ENCODE measurements at regions of chr3 and their contacts with region 1.

Region 1: DNA sequence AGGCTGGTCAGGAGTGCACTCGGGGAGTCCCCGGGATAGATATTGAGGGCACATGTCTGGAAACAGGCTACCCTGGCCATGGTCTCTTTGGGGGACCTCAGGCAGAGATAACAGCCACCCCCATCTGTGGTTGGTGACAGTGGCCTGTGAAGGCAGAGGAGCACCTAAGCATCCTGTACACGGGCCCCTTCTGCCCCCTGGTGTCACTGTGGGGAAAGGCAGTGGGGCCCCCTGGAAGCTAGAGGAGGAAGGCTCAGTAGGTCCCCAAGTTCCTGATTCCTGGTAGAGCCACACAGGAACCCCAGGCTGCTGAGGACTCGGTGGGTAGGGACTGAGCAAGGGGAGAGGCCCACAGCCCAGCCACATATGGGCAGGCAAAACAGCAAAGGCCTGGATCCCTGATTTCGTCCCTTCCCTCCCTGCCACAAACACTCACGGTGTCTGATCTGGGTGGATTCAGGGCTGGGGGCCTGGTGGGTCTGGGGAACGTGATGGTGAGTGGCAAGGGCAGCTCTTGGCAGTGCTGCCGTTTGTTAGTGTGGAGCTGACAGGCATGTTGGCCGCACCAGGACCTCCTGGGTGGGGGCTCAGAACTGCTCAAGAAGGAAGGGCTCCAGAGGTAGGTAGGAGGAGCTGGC is 14.1 kb upstream of the CXCR6 start:
- DNase-seq: peak; percentile 55 to 64 (median 56)
- H3K4me3 ChIP-seq: no peak overlapping the region
- H3K4me3 Mint-ChIP-seq: no peak overlapping the region
- H3K27ac ChIP-seq: no peak overlapping the region
- H3K27ac Mint-ChIP-seq: peak overlapping the region in 3 of 7 donors; percentile 22 to 68 (median 53)
- H3K4me1 ChIP-seq: no peaks in the 10 kb centered on the region
- H3K4me1 Mint-ChIP-seq: peaks cover 5 to 23% (median 9%) of the 10 kb centered on the region in 4 donors
- H3K27me3 ChIP-seq: no peaks in the 10 kb centered on the region
- H3K27me3 Mint-ChIP-seq: no peaks in the 10 kb centered on the region

Region 2: GRCh38 chr3:45507820-45508317 is 421.3 kb before region 1 on chr3:
- CTCF ChIA-PET with region 1: interaction called, 4 read pairs
- POLR2A ChIA-PET with region 1: no interaction called
- intact Hi-C with region 1: loop called (anchors 5 kb)
- DNase-seq: no peak
- H3K4me3 ChIP-seq: no peak overlapping the region
- H3K4me3 Mint-ChIP-seq: no peak overlapping the region
- H3K27ac ChIP-seq: no peak overlapping the region
- H3K27ac Mint-ChIP-seq: no peak overlapping the region
- H3K4me1 ChIP-seq: peaks cover 10% of the 10 kb centered on the region
- H3K4me1 Mint-ChIP-seq: peaks cover 0 to 4% (median 2%) of the 10 kb centered on the region in 4 donors
- H3K27me3 ChIP-seq: no peaks in the 10 kb centered on the region
- H3K27me3 Mint-ChIP-seq: no peaks in the 10 kb centered on the region

Region 3: DNA sequence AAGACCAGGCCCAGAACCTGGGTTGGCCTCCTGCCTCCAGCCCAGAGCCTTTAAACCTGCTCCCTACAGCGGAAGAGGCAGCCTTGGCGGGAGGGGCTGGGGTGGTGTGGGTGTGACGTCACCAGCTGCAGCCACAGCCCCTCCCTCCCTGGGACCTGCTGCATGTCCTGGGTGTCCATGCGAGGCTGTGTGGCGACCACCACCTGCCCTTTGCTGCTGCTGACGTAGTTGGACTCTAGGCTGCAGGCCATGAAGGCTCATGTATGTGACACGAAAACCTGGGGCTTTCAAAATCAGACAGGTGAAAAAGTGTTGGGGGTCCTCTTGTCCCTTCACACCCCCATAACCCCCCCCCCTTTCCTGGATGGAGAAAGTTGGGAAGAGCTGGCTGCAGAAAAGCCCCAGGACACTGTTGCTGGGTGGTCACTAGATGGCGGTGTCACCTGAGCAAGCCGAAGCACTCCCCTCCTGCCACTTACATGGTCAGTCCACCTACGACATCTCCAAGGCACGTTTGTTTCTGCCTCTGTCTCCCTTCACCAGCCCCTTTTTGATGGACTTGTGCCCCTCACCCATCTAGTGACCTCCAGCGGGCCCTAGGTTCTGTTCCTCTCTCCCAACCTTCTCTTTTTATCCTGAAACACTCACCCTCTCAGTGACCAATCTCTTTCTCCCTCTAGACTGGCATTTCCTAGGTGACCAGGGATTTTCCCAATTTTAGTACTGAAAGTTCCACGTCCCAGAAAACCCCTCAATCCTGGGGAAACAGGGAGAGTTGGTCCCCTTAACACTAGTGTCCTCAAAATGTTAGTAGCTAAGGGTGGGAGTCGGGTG is 168.1 kb before region 1 on chr3:
- CTCF ChIA-PET with region 1: interaction called, 63 read pairs
- POLR2A ChIA-PET with region 1: interaction called, 3 read pairs
- intact Hi-C with region 1: no loop called
- DNase-seq: peak in 4 of 5 donors; percentile 30 to 43 (median 34)
- H3K4me3 ChIP-seq: no peak overlapping the region
- H3K4me3 Mint-ChIP-seq: no peak overlapping the region
- H3K27ac ChIP-seq: no peak overlapping the region
- H3K27ac Mint-ChIP-seq: peak overlapping the region in 1 of 7 donors; percentile 8
- H3K4me1 ChIP-seq: no peaks in the 10 kb centered on the region
- H3K4me1 Mint-ChIP-seq: peaks cover 0 to 4% (median 3%) of the 10 kb centered on the region in 4 donors
- H3K27me3 ChIP-seq: no peaks in the 10 kb centered on the region
- H3K27me3 Mint-ChIP-seq: peaks cover 0 to 4% of the 10 kb centered on the region in 2 donors

Region 4: GRCh38 chr3:46110701-46111493 is 181.7 kb after region 1 on chr3:
- CTCF ChIA-PET with region 1: no interaction called
- POLR2A ChIA-PET with region 1: no interaction called
- intact Hi-C with region 1: no loop called
- DNase-seq: no peak
- H3K4me3 ChIP-seq: no peak overlapping the region
- H3K4me3 Mint-ChIP-seq: peak overlapping the region in 1 of 8 donors; percentile 17
- H3K27ac ChIP-seq: no peak overlapping the region
- H3K27ac Mint-ChIP-seq: peak overlapping the region in 5 of 7 donors; percentile 18 to 82 (median 65)
- H3K4me1 ChIP-seq: peaks cover 24% of the 10 kb centered on the region
- H3K4me1 Mint-ChIP-seq: peaks cover 19 to 56% (median 28%) of the 10 kb centered on the region in 4 donors
- H3K27me3 ChIP-seq: no peaks in the 10 kb centered on the region
- H3K27me3 Mint-ChIP-seq: no peaks in the 10 kb centered on the region